BJ (cell line): ENCODE measurements at regions of chr4 and their contacts with region 1.

Region 1: GRCh38 chr4:128454281-128455075 is 166.9 kb upstream of the PGRMC2 start:
- DNase-seq: peak; percentile 43
- H3K4me3 ChIP-seq: no peak overlapping the region
- H3K27me3 ChIP-seq: no peaks in the 10 kb centered on the region
- CTCF ChIP-seq: peak; percentile 88

Region 2: GRCh38 chr4:128465523-128465922 is 11.0 kb after region 1 on chr4:
- CTCF ChIA-PET with region 1: interaction called, 11 read pairs
- POLR2A ChIA-PET with region 1: no interaction called
- DNase-seq: no peak
- H3K4me3 ChIP-seq: no peak overlapping the region
- H3K27me3 ChIP-seq: no peaks in the 10 kb centered on the region
- CTCF ChIP-seq: no peak

Region 3: DNA sequence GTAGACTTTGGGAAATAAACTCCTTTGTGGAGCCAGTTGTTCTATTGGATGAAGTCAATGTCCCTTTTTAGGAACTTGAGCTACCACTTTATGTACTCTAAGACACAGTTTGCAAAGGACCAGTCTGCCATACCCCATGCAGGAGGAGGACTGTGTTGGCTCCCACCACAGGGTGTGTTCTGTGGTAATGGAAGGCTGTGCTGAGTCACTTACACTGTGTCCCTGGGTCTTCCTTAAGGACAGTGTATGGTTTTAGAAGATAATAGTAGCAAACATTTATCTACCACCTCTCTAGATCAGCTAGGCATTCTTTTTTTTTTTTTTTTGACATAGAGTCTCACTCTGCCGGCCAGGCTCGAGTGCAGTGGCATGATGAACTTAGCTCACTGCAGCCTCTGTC is 17.1 kb after region 1 on chr4:
- CTCF ChIA-PET with region 1: interaction called, 11 read pairs
- POLR2A ChIA-PET with region 1: no interaction called
- DNase-seq: no peak
- H3K4me3 ChIP-seq: no peak overlapping the region
- H3K27me3 ChIP-seq: no peaks in the 10 kb centered on the region
- CTCF ChIP-seq: no peak

Region 4: DNA sequence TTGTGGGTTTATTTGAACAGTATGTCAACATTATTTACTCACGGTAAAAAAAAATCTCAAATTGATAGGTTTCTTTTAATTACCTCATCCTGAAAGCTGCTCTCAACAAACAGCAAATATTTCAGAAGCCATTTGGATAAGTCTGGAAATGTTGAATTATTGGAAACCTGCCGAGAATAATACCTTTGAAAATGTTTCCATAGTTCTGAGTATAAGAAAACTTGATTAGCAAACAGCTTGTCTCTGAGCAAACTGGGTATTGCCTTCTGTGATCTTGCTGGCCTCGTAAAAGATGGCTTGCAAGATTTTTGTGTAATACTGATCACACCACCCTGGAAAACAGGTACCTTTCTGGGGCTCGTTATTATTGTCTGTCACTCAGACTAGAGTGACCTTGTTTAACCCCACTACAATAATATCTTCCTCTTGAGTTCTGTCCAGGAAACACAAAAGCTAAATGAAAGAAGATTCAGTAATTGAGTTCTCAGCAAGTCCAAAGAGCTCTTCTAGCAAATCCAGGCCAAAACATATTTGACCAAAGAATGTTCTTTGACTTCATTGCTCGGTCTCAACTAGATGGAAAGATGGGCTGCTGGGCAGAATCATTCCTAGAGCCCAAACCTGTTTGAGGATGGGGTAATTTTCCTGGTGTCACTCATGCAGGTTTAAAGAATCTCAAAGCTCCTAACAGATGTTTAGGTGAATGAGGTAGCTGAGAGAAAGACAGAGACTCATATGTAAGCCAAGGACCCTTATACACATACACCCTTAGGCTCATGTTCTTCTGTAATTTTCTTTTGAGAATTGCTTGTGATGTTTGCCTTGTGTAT is 99.4 kb after region 1 on chr4:
- CTCF ChIA-PET with region 1: interaction called, 31 read pairs
- POLR2A ChIA-PET with region 1: no interaction called
- DNase-seq: no peak
- H3K4me3 ChIP-seq: no peak overlapping the region; the same call in 1 of the 2 replicates
- H3K27me3 ChIP-seq: no peaks in the 10 kb centered on the region
- CTCF ChIP-seq: no peak

Region 5: DNA sequence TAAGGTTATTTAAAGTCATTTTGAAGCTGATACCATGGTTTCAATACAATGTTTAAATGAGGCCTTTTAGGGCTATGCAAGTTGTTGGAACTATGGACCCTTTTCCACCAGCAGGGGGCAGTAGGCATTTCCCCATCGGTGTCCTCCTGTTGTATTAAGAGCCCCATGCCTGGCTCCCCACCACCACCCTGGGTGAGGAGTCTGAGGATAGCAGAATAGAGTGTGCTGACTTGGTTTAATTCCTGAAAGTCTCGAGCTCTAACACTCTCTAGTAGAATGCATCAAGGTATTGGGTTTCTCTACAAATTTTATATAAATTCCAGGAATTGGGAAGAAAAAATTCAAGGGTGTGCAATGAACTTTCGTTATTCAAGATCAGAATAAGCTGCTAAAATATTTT is 120.2 kb after region 1 on chr4:
- CTCF ChIA-PET with region 1: interaction called, 15 read pairs
- POLR2A ChIA-PET with region 1: no interaction called
- DNase-seq: no peak
- H3K4me3 ChIP-seq: no peak overlapping the region
- H3K27me3 ChIP-seq: no peaks in the 10 kb centered on the region
- CTCF ChIP-seq: peak; percentile 48

Region 6: GRCh38 chr4:128809477-128810330 is 355.2 kb after region 1 on chr4 and contains the start of gene JADE1:
- CTCF ChIA-PET with region 1: interaction called, 14 read pairs
- POLR2A ChIA-PET with region 1: no interaction called
- DNase-seq: peak; percentile 65
- H3K4me3 ChIP-seq: peak within 1 kb of the TSS; percentile 73
- H3K27me3 ChIP-seq: no peaks in the 10 kb centered on the region
- CTCF ChIP-seq: peak; percentile 67
- polyA plus RNA-seq, gene JADE1: 15.4 and 17.4 TPM in 2 replicates